Right lobe of liver (tissue), 6 donors: ENCODE measurements at regions of chr6 and their contacts with region 1.

Region 1: DNA sequence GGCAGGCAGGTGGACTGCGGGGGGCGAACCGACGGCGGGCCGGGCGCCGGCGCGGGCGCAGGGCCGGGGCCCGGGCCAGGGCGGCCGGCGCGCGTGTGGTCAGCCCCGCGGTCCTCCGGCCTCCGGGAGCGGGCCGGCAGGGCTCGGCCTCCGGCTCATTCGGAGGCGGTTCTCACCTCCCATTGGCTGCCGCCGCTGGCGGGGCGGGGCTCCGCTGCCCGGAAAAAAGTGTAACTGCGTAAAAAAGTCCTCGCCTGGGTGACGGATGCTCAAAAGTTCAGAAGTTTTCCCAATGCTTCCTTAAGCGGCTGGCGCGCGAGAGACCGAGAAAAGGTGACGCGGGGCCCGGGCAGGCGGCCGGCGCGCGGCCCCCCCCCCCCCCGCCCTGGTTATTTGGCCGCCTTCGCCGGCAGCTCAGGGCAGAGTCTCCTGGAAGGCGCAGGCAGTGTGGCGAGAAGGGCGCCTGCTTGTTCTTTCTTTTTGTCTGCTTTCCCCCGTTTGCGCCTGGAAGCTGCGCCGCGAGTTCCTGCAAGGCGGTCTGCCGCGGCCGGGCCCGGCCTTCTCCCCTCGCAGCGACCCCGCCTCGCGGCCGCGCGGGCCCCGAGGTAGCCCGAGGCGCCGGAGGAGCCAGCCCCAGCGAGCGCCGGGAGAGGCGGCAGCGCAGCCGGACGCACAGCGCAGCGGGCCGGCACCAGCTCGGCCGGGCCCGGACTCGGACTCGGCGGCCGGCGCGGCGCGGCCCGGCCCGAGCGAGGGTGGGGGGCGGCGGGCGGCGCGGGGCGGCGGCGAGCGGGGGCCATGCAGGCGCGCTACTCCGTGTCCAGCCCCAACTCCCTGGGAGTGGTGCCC is at the start of gene FOXC1:
- DNase-seq: peak; percentile 87 to 89 (median 87)
- ATAC-seq: peak; percentile 87 to 90 (median 88)
- H3K4me3 ChIP-seq: peak within 1 kb of the TSS; percentile 42 to 59 (median 57)
- H3K27ac ChIP-seq: peak within 1 kb of the TSS in 1 of 3 donors; percentile 72
- H3K4me1 ChIP-seq: peaks cover 0 to 28% (median 14%) of the 10 kb centered on the region in 4 donors
- H3K27me3 ChIP-seq: peaks cover 20 to 67% of the 10 kb centered on the region in 2 donors
- CTCF ChIP-seq: no peak
- POLR2A ChIP-seq: peak; percentile 21
- total RNA-seq, gene FOXC1: 0.24 to 0.87 (median 0.50) TPM

Region 2: GRCh38 chr6:2103644-2104523 is 494.0 kb after region 1 on chr6:
- intact Hi-C with region 1: loop called in 1 of 2 experiments (anchors 10 kb)
- DNase-seq: peak; percentile 38 to 61 (median 59)
- ATAC-seq: peak; percentile 90 to 97 (median 94)
- H3K4me3 ChIP-seq: peak overlapping the region in 2 of 3 donors; percentile 32 to 45
- H3K27ac ChIP-seq: no peak overlapping the region
- H3K4me1 ChIP-seq: peaks cover 0 to 20% (median 5%) of the 10 kb centered on the region in 4 donors
- H3K27me3 ChIP-seq: no peaks in the 10 kb centered on the region
- CTCF ChIP-seq: peak; percentile 56 to 70 (median 58)
- POLR2A ChIP-seq: no peak

Region 3: GRCh38 chr6:2111162-2111677 is 501.3 kb after region 1 on chr6:
- intact Hi-C with region 1: loop called (anchors 10 kb)
- DNase-seq: no peak
- ATAC-seq: peak; percentile 31 to 68 (median 48)
- H3K4me3 ChIP-seq: no peak overlapping the region
- H3K27ac ChIP-seq: peak overlapping the region in 2 of 3 donors; percentile 6 to 16
- H3K4me1 ChIP-seq: no peaks in the 10 kb centered on the region
- H3K27me3 ChIP-seq: no peaks in the 10 kb centered on the region
- CTCF ChIP-seq: no peak
- POLR2A ChIP-seq: no peak

Region 4: DNA sequence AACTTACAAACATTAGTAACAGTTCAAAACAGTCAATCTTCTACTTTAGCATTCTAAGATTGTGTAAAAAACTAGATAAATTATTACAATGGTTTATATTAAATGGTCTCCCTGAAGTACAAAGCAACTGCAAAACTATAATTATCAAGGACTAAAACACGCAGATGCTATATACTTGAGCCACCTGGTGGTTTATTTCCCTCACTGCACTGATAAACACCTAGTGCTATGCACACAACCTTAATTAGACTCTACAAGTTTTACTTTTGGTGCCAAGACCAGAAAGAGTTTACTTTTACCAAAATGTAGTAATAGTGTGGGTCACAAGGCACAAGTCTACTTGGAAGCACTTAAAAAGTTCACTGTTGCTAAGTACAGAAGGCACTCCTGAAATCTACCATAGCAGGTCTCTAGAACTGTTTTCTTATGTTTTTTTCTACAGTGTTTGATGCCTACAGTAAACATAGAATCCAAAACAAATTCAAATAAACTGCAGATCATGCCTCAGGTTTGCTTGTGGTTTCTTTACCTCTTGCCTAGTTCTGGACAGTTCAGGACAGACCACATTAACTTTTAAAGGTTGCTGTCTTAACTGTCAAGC is 586.3 kb after region 1 on chr6:
- intact Hi-C with region 1: loop called in 1 of 2 experiments (anchors 5 kb)
- DNase-seq: no peak
- ATAC-seq: peak; percentile 82 to 91 (median 88)
- H3K4me3 ChIP-seq: no peak overlapping the region
- H3K27ac ChIP-seq: no peak overlapping the region
- H3K4me1 ChIP-seq: peaks cover 0 to 5% (median 0%) of the 10 kb centered on the region in 4 donors
- H3K27me3 ChIP-seq: no peaks in the 10 kb centered on the region
- CTCF ChIP-seq: peak; percentile 69 to 77 (median 75)
- POLR2A ChIP-seq: no peak

Region 5: GRCh38 chr6:2353412-2354137 is 743.7 kb after region 1 on chr6:
- intact Hi-C with region 1: loop called in 1 of 2 experiments (anchors 10 kb)
- DNase-seq: peak in 2 of 3 donors; percentile 38 to 67
- ATAC-seq: peak; percentile 87 to 98 (median 92)
- H3K4me3 ChIP-seq: no peak overlapping the region
- H3K27ac ChIP-seq: no peak overlapping the region
- H3K4me1 ChIP-seq: peaks cover 0 to 4% (median 0%) of the 10 kb centered on the region in 4 donors
- H3K27me3 ChIP-seq: no peaks in the 10 kb centered on the region
- CTCF ChIP-seq: peak; percentile 74 to 89 (median 82)
- POLR2A ChIP-seq: no peak

Region 6: GRCh38 chr6:2634139-2634964 is 1024.5 kb after region 1 on chr6:
- intact Hi-C with region 1: loop called in 1 of 2 experiments (anchors 10 kb)
- DNase-seq: peak; percentile 83 to 89 (median 83)
- ATAC-seq: peak; percentile 96 to 98 (median 98)
- H3K4me3 ChIP-seq: peak overlapping the region; percentile 41 to 56 (median 51)
- H3K27ac ChIP-seq: peak overlapping the region in 2 of 3 donors; percentile 30 to 62
- H3K4me1 ChIP-seq: peaks cover 0 to 6% (median 0%) of the 10 kb centered on the region in 4 donors
- H3K27me3 ChIP-seq: no peaks in the 10 kb centered on the region
- CTCF ChIP-seq: peak; percentile 95 to 100 (median 99)
- POLR2A ChIP-seq: no peak